Left ventricle myocardium superior (tissue), 1 donor: ENCODE measurements at regions of chr21 and their contacts with region 1.

Region 1: DNA sequence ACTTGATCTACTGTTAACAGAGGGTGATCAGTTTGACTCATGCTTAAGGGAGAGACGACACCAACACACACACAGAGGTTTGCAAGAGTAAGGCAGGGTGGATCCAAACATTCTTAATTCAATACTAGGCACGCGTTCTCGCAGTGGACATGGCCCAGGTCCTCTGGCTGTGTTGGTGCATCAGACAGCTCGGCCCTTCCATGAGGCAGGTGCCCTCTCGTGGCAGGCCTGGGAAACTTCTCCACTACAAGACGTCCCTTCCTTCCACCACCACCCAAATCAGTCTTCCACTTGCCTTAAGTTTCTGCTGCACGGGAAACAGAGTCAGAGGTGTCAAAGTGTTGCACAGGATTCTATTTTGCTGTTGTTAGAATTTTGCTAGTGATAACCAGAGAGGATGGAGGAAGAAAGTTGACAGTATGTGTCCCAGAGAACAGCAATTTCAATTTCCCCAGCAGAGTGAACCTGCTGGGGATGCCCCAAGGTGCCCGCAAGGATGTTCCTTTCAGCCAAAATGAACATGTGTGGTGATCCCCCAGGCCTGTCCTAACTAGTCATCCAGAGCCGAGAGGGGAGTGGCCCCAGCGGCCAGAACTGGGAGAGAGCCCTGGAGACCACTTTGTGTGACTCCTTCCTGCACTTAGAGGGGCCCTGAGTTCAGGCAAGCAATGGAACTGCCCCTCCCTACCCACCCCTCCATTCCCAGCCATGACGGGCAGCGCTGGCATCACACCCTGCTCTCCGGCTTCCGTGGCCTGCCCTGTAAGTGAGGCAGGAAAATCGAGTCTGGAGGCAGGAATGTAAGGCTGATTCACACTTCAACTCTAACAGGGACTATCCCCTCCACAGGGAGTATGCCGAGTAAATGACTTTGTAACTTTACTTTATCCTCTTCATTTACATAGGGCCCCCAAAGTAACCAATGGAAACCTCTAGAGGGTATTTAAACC is 34.8 kb downstream of the MX1 start:
- DNase-seq: peak; percentile 79
- ATAC-seq: no peak

Region 2: DNA sequence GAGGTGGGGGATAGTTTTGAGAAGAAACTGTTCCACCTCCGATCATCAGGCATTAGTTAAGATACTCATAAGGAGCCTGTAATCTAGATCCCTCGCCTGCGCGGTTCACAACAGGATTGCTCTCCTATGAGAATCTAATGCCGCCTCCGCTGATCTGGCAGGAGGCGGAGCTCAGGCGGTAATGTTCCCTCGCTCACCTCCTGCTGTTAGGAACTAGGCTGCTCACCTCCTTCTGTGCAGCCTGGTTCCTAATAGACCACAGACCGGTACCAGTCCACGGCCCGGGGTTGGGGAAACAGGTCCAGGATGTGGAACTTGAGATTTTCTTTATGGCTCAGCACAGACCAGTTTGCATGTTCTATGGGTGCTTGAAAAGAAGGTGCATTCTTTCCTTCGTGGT is 171.4 kb before region 1 on chr21:
- intact Hi-C with region 1: loop called (anchors 5 kb)
- DNase-seq: no peak
- ATAC-seq: no peak

Region 3: GRCh38 chr21:41733949-41734645 is 273.2 kb after region 1 on chr21:
- intact Hi-C with region 1: no loop called
- DNase-seq: no peak
- ATAC-seq: no peak